AG04450 (cell line): ENCODE measurements at regions of chr1 and their contacts with region 1.

Region 1: DNA sequence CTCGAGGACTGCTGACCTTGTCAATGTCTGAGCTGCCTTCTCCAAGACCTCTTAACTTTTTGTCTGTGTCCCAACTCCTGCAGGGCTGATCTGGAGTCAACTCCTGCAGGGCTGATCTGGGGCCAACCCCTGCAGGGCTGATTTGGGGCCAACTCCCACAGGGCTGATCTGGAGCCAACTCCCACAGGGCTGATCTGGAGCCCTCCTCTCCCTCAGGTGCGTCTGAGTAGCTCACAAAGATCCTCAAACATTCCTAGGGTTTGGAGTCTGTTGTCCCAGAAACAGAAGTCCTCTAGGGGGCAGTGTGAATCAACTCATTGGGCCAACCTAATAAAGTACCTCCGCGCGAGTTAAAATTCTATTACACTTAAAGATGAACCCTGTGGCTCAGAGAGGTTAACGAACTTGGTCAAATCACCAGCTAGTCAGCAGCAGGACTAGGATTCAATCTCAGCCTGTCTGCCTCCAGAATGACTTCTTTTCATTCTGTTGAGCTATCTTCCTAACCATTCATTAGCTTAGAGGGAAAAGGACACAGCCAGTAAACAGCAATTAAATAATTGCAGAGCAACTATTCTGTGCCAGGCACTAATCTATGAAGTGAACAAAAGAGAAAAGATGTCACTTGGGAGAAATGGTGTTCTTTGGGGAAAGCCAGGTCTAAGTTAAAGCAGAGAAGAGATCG is 17.2 kb upstream of the RLF start:
- DNase-seq: peak; percentile 36
- H3K4me3 ChIP-seq: no peak overlapping the region
- H3K27ac ChIP-seq: no peak overlapping the region
- H3K27me3 ChIP-seq: peaks cover 30% of the 10 kb centered on the region
- CTCF ChIP-seq: peak; percentile 85

Region 2: DNA sequence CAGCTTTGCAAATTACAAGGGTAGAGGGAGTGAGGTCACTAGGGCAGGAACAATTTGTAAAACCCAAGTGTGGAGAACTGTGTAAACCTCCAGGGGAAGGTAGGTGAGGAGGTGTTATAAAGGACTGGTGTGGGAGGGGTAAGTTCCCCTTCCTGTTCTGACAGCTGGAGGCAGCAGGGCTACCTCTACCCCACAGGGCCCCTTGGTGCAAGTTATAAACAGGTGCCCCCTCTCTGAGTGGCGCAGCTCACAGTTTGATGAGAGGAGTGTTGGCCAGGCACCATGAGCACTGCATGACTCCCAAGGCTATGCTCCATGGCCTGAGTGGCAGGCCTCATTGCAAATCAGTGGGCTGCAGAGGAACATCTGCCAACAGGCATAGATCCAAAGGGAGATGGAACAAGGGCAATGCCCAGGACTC is 148.1 kb before region 1 on chr1:
- CTCF ChIA-PET with region 1: no interaction called
- POLR2A ChIA-PET with region 1: no interaction called
- DNase-seq: no peak
- H3K4me3 ChIP-seq: no peak overlapping the region
- H3K27ac ChIP-seq: no peak overlapping the region
- H3K27me3 ChIP-seq: no peaks in the 10 kb centered on the region
- CTCF ChIP-seq: no peak

Region 3: DNA sequence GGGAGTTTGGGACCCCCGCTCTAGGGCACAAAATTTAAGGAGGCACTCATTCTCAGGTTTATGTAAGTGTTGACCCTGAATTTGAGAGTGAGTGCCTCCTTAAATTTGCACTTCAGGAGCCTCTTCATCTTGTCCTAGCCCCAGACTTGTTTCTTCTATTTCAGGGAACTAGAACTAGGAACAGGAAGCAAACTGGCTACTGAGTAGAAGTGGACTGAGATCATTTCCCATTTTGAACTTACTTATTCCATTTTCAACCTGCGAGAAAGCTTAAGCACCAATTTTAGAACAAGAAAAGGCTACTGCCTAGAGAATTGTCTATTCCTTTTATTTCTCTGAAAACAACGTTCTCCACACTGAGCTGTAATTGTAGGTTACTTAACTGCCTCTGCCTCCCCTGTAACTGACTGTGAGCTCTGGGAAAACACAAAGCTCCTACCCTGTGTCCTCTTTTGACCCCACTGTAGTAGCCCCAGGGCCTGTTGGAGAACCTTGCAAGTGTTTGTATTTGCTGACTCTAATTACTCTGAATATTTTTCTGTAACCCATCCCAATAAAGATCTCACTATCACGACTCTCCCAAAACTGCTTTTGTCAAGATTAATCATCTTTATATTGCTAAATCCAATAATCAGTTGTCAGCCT is 49.4 kb before region 1 on chr1:
- CTCF ChIA-PET with region 1: interaction called, 23 read pairs
- POLR2A ChIA-PET with region 1: no interaction called
- DNase-seq: no peak
- H3K4me3 ChIP-seq: no peak overlapping the region
- H3K27ac ChIP-seq: no peak overlapping the region
- H3K27me3 ChIP-seq: no peaks in the 10 kb centered on the region
- CTCF ChIP-seq: no peak

Region 4: GRCh38 chr1:40161125-40161887 is 17.3 kb after region 1 on chr1 and contains the start of gene RLF:
- CTCF ChIA-PET with region 1: interaction called, 31 read pairs
- POLR2A ChIA-PET with region 1: no interaction called
- DNase-seq: peak; percentile 78
- H3K4me3 ChIP-seq: peak within 1 kb of the TSS; percentile 85
- H3K27ac ChIP-seq: peak within 1 kb of the TSS; percentile 92
- H3K27me3 ChIP-seq: no peaks in the 10 kb centered on the region
- CTCF ChIP-seq: no peak
- polyA plus RNA-seq, gene RLF: 7.4 and 11.0 TPM in 2 replicates

Region 5: GRCh38 chr1:40344597-40344996 is 200.6 kb after region 1 on chr1:
- CTCF ChIA-PET with region 1: interaction called, 143 read pairs
- POLR2A ChIA-PET with region 1: no interaction called
- DNase-seq: peak; percentile 23
- H3K4me3 ChIP-seq: no peak overlapping the region
- H3K27ac ChIP-seq: no peak overlapping the region
- H3K27me3 ChIP-seq: no peaks in the 10 kb centered on the region
- CTCF ChIP-seq: no peak

Region 6: GRCh38 chr1:40438391-40439015 is 294.5 kb after region 1 on chr1:
- CTCF ChIA-PET with region 1: interaction called, 32 read pairs
- POLR2A ChIA-PET with region 1: no interaction called
- DNase-seq: no peak
- H3K4me3 ChIP-seq: no peak overlapping the region
- H3K27ac ChIP-seq: no peak overlapping the region
- H3K27me3 ChIP-seq: no peaks in the 10 kb centered on the region
- CTCF ChIP-seq: peak; percentile 56